ENCODE measurements at regions of chr18 and their contacts with region 1.

Region 1: GRCh38 chr18:32018331-32019250 is at the start of gene RNF125:
- DNase-seq: peak; percentile 90
- H3K4me3 Mint-ChIP-seq: peak within 1 kb of the TSS; percentile 100
- H3K27ac Mint-ChIP-seq: peak within 1 kb of the TSS; percentile 97
- H3K4me1 Mint-ChIP-seq: peaks cover 40% of the 10 kb centered on the region
- H3K27me3 Mint-ChIP-seq: no peaks in the 10 kb centered on the region
- total RNA-seq, gene RNF125: 36.8 to 37.6 TPM

Region 2: DNA sequence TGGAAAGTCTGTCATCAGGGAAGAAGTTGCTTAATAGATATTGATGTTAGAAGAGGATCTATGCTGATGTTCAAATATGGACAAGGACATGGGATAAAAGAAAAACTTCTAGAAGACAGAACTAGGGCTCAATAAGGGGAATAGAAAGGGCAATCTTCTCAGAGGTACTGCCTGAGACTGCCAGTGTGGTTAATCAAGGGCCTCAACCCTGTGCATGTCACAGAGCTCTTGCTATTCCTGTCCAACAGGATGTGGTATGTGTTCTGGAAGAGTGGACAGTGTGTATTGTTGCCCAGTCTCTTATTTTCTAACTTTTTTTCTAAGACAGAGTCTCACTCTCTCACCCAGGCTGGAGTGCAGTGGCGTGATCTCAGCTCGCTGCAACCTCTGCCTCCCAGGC is 27.8 kb before region 1 on chr18:
- CTCF ChIA-PET with region 1: no interaction called
- POLR2A ChIA-PET with region 1: no interaction called
- intact Hi-C with region 1: no loop called
- DNase-seq: no peak
- H3K4me3 Mint-ChIP-seq: no peak overlapping the region
- H3K27ac Mint-ChIP-seq: no peak overlapping the region
- H3K4me1 Mint-ChIP-seq: no peaks in the 10 kb centered on the region
- H3K27me3 Mint-ChIP-seq: no peaks in the 10 kb centered on the region

Region 3: DNA sequence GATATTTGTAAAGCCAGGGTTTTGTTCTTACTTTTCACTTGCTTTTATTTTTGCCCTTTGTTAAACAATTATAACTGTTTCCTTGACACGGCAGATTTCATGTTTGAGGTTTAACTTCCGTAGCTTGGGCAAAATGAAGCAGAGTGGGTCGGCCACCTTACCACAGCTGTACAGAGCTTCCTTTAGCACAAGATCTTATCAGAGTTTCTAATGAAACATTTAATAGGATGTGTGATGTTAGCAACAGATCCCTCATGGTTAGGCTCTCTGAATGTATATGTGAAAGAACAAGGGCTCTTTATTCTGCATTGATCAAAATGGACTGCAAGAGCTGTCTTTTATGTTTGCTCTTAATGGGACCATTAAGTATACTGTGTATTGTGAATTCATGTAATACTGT is 22.3 kb after region 1 on chr18:
- CTCF ChIA-PET with region 1: interaction called, 10 read pairs
- POLR2A ChIA-PET with region 1: interaction called, 27 read pairs
- intact Hi-C with region 1: loop called (anchors 1 kb)
- DNase-seq: peak; percentile 73
- H3K4me3 Mint-ChIP-seq: peak overlapping the region; percentile 21
- H3K27ac Mint-ChIP-seq: peak overlapping the region; percentile 87
- H3K4me1 Mint-ChIP-seq: peaks cover 66% of the 10 kb centered on the region
- H3K27me3 Mint-ChIP-seq: no peaks in the 10 kb centered on the region

Region 4: DNA sequence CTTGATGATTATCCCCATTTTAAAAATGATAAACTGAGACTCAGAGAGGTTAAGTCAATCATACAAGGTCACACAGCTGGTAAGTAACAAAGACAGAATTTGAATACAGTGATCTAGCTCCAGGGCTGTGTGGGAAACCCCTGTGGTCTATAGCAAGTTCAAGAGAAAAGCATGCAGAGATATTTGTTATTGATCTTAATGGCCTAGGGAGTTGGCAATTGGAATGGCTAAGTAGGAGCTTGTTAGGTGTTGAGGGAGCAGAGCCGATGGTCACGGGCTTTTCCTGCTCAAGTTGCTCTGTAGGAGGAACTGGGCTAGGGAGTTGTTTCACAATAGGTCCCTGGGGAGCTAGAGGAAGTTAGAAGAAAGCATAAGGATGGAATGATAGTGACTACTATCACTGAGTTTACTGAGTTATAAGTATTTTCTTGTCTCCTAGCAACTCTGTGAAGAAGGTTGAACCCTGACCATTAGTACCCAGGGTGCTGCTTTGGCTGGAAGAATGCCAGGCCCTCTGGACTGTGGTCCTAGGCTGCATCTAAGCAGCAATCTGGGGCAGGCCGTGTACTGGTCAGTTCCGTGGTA is 30.0 kb after region 1 on chr18:
- CTCF ChIA-PET with region 1: interaction called, 11 read pairs
- POLR2A ChIA-PET with region 1: interaction called, 36 read pairs
- intact Hi-C with region 1: loop called (anchors 1 kb)
- DNase-seq: peak; percentile 45
- H3K4me3 Mint-ChIP-seq: no peak overlapping the region
- H3K27ac Mint-ChIP-seq: peak overlapping the region; percentile 91
- H3K4me1 Mint-ChIP-seq: peaks cover 39% of the 10 kb centered on the region
- H3K27me3 Mint-ChIP-seq: no peaks in the 10 kb centered on the region

Region 5: GRCh38 chr18:32072321-32072720 is 53.7 kb after region 1 on chr18:
- CTCF ChIA-PET with region 1: interaction called, 34 read pairs
- POLR2A ChIA-PET with region 1: interaction called, 16 read pairs
- intact Hi-C with region 1: loop called (anchors 1 kb)
- DNase-seq: no peak
- H3K4me3 Mint-ChIP-seq: no peak overlapping the region
- H3K27ac Mint-ChIP-seq: peak overlapping the region; percentile 13
- H3K4me1 Mint-ChIP-seq: peaks cover 27% of the 10 kb centered on the region
- H3K27me3 Mint-ChIP-seq: no peaks in the 10 kb centered on the region

Region 6: DNA sequence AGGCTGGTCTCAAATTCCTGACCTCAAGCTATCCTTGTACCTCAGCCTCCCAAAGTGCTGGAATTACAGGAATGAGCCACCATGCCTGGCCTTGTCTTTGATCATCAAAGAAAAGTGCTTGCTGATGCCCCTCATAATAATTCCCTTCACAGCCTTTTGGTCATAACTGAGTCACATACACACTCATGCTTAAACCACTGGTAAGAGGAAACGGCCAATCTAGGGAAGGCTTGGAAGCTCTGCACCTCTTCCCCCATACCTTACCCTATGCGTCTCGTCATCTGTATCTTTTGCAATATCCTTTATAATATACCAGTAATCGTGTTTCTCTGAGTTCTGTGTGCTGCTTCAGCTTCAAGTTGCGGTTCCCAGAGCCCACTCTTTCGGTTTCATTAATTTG is 68.3 kb after region 1 on chr18:
- CTCF ChIA-PET with region 1: interaction called, 15 read pairs
- POLR2A ChIA-PET with region 1: interaction called, 44 read pairs
- intact Hi-C with region 1: loop called (anchors 1 kb)
- DNase-seq: no peak
- H3K4me3 Mint-ChIP-seq: no peak overlapping the region
- H3K27ac Mint-ChIP-seq: no peak overlapping the region
- H3K4me1 Mint-ChIP-seq: peaks cover 35% of the 10 kb centered on the region
- H3K27me3 Mint-ChIP-seq: no peaks in the 10 kb centered on the region

Region 7: GRCh38 chr18:33532978-33533377 is 1514.4 kb after region 1 on chr18:
- CTCF ChIA-PET with region 1: no interaction called
- POLR2A ChIA-PET with region 1: no interaction called
- intact Hi-C with region 1: no loop called
- DNase-seq: no peak
- H3K4me3 Mint-ChIP-seq: no peak overlapping the region
- H3K27ac Mint-ChIP-seq: no peak overlapping the region
- H3K4me1 Mint-ChIP-seq: no peaks in the 10 kb centered on the region
- H3K27me3 Mint-ChIP-seq: no peaks in the 10 kb centered on the region

Measured in activated CD4-positive, alpha-beta memory T cell treated with anti-CD3 and anti-CD28 coated beads for 36 hours (primary cell).